HCT116 (cell line): ENCODE measurements at regions of chr1 and their contacts with region 1.

Region 1: GRCh38 chr1:109397538-109398342 is at the start of gene SORT1:
- DNase-seq: peak; percentile 74
- ATAC-seq: peak; percentile 98
- H3K4me3 ChIP-seq: peak within 1 kb of the TSS; percentile 45 to 62
- H3K27ac ChIP-seq: no peak within 1 kb of the TSS; the same call in 1 of the 2 replicates
- H3K4me1 ChIP-seq: peaks cover 11 to 21% of the 10 kb centered on the region in 2 experiments
- H3K27me3 ChIP-seq: no peaks in the 10 kb centered on the region; the same call in 1 of the 2 replicates
- CTCF ChIP-seq: no peak
- POLR2A ChIP-seq: no peak
- RAD21 ChIP-seq: no peak
- total RNA-seq, gene SORT1: 20.2 TPM

Region 2: GRCh38 chr1:107782217-107782845 is 1615.4 kb before region 1 on chr1:
- CTCF ChIA-PET with region 1: no interaction called
- POLR2A ChIA-PET with region 1: no interaction called
- RAD21 ChIA-PET with region 1: no interaction called
- intact Hi-C with region 1: loop called (anchors 5 kb)
- DNase-seq: peak; percentile 34
- ATAC-seq: peak; percentile 59; the same call in 1 of the 2 replicates
- H3K4me3 ChIP-seq: no peak overlapping the region
- H3K27ac ChIP-seq: no peak overlapping the region
- H3K4me1 ChIP-seq: no peaks in the 10 kb centered on the region
- H3K27me3 ChIP-seq: peaks cover 6% of the 10 kb centered on the region; the same call in 1 of the 2 replicates
- CTCF ChIP-seq: peak; percentile 46 to 71 (median 48); a peak in 4 of 6 replicates
- POLR2A ChIP-seq: no peak
- RAD21 ChIP-seq: peak; percentile 78

Region 3: DNA sequence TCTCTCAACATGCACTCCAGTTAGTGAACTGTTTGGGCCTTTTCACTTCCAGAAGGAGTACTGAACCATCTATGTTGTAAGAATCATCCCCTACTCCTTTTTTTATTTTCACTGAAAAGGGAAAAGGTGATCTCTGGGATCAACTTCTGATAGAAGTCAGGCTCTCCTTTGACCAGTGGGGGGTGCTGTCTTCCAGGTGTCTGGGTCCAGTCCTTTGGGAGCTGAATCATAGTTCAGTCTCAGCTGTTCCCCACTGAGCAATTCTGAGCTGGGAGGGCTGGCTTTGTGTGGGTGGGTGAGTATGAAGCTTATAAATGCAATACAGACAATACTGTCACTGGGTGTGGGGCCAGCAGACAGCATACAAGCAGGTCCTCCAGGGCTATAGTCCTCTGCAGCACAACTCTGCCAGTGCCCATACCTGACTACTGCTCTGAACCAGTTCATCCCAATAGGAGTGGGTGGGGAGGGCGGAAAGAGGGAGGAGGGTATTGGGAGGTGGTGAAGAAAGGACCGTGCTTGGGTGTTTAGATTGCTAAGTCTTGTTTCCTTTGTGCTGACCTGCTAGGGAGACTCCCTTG is 196.5 kb before region 1 on chr1:
- CTCF ChIA-PET with region 1: interaction called, 3 read pairs
- POLR2A ChIA-PET with region 1: no interaction called
- RAD21 ChIA-PET with region 1: no interaction called
- intact Hi-C with region 1: loop called (anchors 2 kb)
- DNase-seq: no peak
- ATAC-seq: peak; percentile 59
- H3K4me3 ChIP-seq: no peak overlapping the region
- H3K27ac ChIP-seq: no peak overlapping the region
- H3K4me1 ChIP-seq: peaks cover 18 to 35% of the 10 kb centered on the region in 2 experiments
- H3K27me3 ChIP-seq: no peaks in the 10 kb centered on the region
- CTCF ChIP-seq: peak; percentile 71 to 91 (median 89); a peak in 5 of 6 replicates
- POLR2A ChIP-seq: no peak
- RAD21 ChIP-seq: peak; percentile 81

Region 4: GRCh38 chr1:109213785-109214468 is 183.8 kb before region 1 on chr1 and contains the start of gene SARS1:
- CTCF ChIA-PET with region 1: no interaction called
- POLR2A ChIA-PET with region 1: no interaction called
- RAD21 ChIA-PET with region 1: no interaction called
- intact Hi-C with region 1: no loop called
- DNase-seq: peak; percentile 57
- ATAC-seq: peak; percentile 93
- H3K4me3 ChIP-seq: peak within 1 kb of the TSS; percentile 88 to 96
- H3K27ac ChIP-seq: peak within 1 kb of the TSS; percentile 72
- H3K4me1 ChIP-seq: peaks cover 9 to 31% of the 10 kb centered on the region in 2 experiments
- H3K27me3 ChIP-seq: no peaks in the 10 kb centered on the region
- CTCF ChIP-seq: no peak
- POLR2A ChIP-seq: no peak
- RAD21 ChIP-seq: no peak
- total RNA-seq, gene SARS1: 206 TPM

Region 5: GRCh38 chr1:109263597-109264398 is 133.9 kb before region 1 on chr1:
- CTCF ChIA-PET with region 1: interaction called, 4 read pairs
- POLR2A ChIA-PET with region 1: no interaction called
- RAD21 ChIA-PET with region 1: no interaction called
- intact Hi-C with region 1: loop called (anchors 2 kb)
- DNase-seq: peak; percentile 88
- ATAC-seq: peak; percentile 96
- H3K4me3 ChIP-seq: no peak overlapping the region
- H3K27ac ChIP-seq: peak overlapping the region; percentile 2; the same call in 1 of the 2 replicates
- H3K4me1 ChIP-seq: peaks cover 0 to 9% of the 10 kb centered on the region in 2 experiments; a peak in 2 of 4 replicates
- H3K27me3 ChIP-seq: no peaks in the 10 kb centered on the region
- CTCF ChIP-seq: peak; percentile 99 to 100 (median 99)
- POLR2A ChIP-seq: no peak
- RAD21 ChIP-seq: peak; percentile 96

Region 6: GRCh38 chr1:109277434-109278204 is 120.1 kb before region 1 on chr1:
- CTCF ChIA-PET with region 1: interaction called, 95 read pairs
- POLR2A ChIA-PET with region 1: interaction called, 4 read pairs
- RAD21 ChIA-PET with region 1: interaction called, 4 to 5 read pairs
- intact Hi-C with region 1: loop called (anchors 2 kb)
- DNase-seq: peak; percentile 69
- ATAC-seq: peak; percentile 80
- H3K4me3 ChIP-seq: no peak overlapping the region
- H3K27ac ChIP-seq: peak overlapping the region; percentile 24; the same call in 1 of the 2 replicates
- H3K4me1 ChIP-seq: peaks cover 38 to 53% of the 10 kb centered on the region in 2 experiments
- H3K27me3 ChIP-seq: no peaks in the 10 kb centered on the region
- CTCF ChIP-seq: peak; percentile 77 to 93 (median 88)
- POLR2A ChIP-seq: no peak
- RAD21 ChIP-seq: peak; percentile 82

Region 7: GRCh38 chr1:109282952-109283747 is 114.6 kb before region 1 on chr1 and contains the start of gene PSRC1:
- CTCF ChIA-PET with region 1: interaction called, 95 read pairs
- POLR2A ChIA-PET with region 1: interaction called, 3 read pairs
- RAD21 ChIA-PET with region 1: no interaction called
- intact Hi-C with region 1: no loop called
- DNase-seq: peak; percentile 86
- ATAC-seq: peak; percentile 97
- H3K4me3 ChIP-seq: peak within 1 kb of the TSS; percentile 78 to 87
- H3K27ac ChIP-seq: peak within 1 kb of the TSS; percentile 80
- H3K4me1 ChIP-seq: peaks cover 8 to 15% of the 10 kb centered on the region in 2 experiments; a peak in 3 of 4 replicates
- H3K27me3 ChIP-seq: no peaks in the 10 kb centered on the region
- CTCF ChIP-seq: peak in 2 of 3 experiments; percentile 5 to 18; a peak in 1 of 6 replicates
- POLR2A ChIP-seq: peak; percentile 82
- RAD21 ChIP-seq: no peak
- total RNA-seq, gene PSRC1: 44.8 TPM

Region 8: DNA sequence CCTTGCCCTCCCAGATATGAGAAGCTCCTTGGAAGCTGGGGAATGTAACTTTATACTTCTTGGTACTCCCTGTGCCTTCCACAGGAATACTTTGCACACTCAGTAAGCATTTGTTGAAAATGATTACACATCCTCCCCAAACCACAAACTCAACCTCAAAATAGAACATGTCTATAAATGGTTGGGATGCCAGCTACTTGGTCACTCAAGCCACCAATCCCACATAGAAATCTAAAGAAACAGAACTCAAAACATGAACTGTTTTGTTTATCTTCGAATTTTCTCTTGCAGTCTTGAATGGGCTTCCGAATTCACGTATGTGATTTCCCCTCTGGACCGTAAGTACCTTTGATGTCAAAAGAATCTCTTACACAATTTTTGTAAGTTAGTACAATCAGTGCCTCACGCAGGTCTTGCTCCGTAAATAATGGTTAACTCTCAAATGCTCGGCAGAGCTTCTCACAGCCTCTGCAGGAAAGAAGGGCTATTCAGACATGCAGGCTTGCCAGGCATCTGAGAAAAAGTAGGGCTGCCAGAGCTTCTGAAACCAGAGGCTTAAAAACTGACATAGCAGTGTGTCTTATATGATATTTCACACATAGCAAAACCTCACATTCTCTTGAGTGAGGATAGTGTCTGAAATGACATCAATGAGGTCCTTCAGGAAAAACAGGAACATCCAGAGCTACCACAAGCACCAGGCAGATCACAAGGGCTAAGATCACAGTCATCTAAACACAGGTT is 26.9 kb before region 1 on chr1:
- CTCF ChIA-PET with region 1: interaction called, 3 read pairs
- POLR2A ChIA-PET with region 1: no interaction called
- RAD21 ChIA-PET with region 1: no interaction called
- intact Hi-C with region 1: loop called (anchors 2 kb)
- DNase-seq: no peak
- ATAC-seq: no peak; the same call in 1 of the 2 replicates
- H3K4me3 ChIP-seq: no peak overlapping the region
- H3K27ac ChIP-seq: no peak overlapping the region
- H3K4me1 ChIP-seq: peaks cover 0 to 9% of the 10 kb centered on the region in 2 experiments; a peak in 2 of 4 replicates
- H3K27me3 ChIP-seq: no peaks in the 10 kb centered on the region
- CTCF ChIP-seq: no peak
- POLR2A ChIP-seq: no peak
- RAD21 ChIP-seq: no peak